SK-N-SH (cell line): ENCODE measurements at regions of chr5 and their contacts with region 1.

Region 1: GRCh38 chr5:44774279-44774880 is 34.4 kb upstream of the MRPS30 start:
- DNase-seq: peak; percentile 20
- H3K4me3 ChIP-seq: no peak overlapping the region; a peak in 1 of 4 replicates
- H3K27ac ChIP-seq: no peak overlapping the region
- H3K4me1 ChIP-seq: no peaks in the 10 kb centered on the region; a peak in 1 of 4 replicates
- H3K27me3 ChIP-seq: no peaks in the 10 kb centered on the region
- CTCF ChIP-seq: peak; percentile 73
- EP300 ChIP-seq: no peak
- RAD21 ChIP-seq: peak; percentile 84

Region 2: GRCh38 chr5:44536650-44537260 is 237.6 kb before region 1 on chr5:
- CTCF ChIA-PET with region 1: interaction called, 14 read pairs
- POLR2A ChIA-PET with region 1: no interaction called
- DNase-seq: peak; percentile 35
- H3K4me3 ChIP-seq: no peak overlapping the region; a peak in 1 of 4 replicates
- H3K27ac ChIP-seq: no peak overlapping the region
- H3K4me1 ChIP-seq: no peaks in the 10 kb centered on the region
- H3K27me3 ChIP-seq: no peaks in the 10 kb centered on the region
- CTCF ChIP-seq: peak; percentile 85
- EP300 ChIP-seq: no peak
- RAD21 ChIP-seq: peak; percentile 65

Region 3: GRCh38 chr5:44740659-44741058 is 33.7 kb before region 1 on chr5:
- CTCF ChIA-PET with region 1: no interaction called
- POLR2A ChIA-PET with region 1: no interaction called
- DNase-seq: no peak
- H3K4me3 ChIP-seq: no peak overlapping the region
- H3K27ac ChIP-seq: no peak overlapping the region
- H3K4me1 ChIP-seq: no peaks in the 10 kb centered on the region
- H3K27me3 ChIP-seq: no peaks in the 10 kb centered on the region
- CTCF ChIP-seq: no peak
- EP300 ChIP-seq: no peak
- RAD21 ChIP-seq: no peak

Region 4: GRCh38 chr5:44860267-44860666 is 85.9 kb after region 1 on chr5:
- CTCF ChIA-PET with region 1: no interaction called
- POLR2A ChIA-PET with region 1: no interaction called
- DNase-seq: no peak
- H3K4me3 ChIP-seq: no peak overlapping the region
- H3K27ac ChIP-seq: no peak overlapping the region
- H3K4me1 ChIP-seq: no peaks in the 10 kb centered on the region
- H3K27me3 ChIP-seq: peaks cover 11% of the 10 kb centered on the region; the same call in 1 of the 2 replicates
- CTCF ChIP-seq: no peak
- EP300 ChIP-seq: no peak
- RAD21 ChIP-seq: no peak